Mammary epithelial cell (primary cell): ENCODE measurements at regions of chr17 and their contacts with region 1.

Region 1: GRCh38 chr17:59786536-59787319 is 79.3 kb downstream of the VMP1 start:
- DNase-seq: peak; percentile 100
- H3K4me3 ChIP-seq: peak overlapping the region in 1 of 3 experiments; percentile 0
- H3K27ac ChIP-seq: peak overlapping the region; percentile 99
- H3K4me1 ChIP-seq: peaks cover 37% of the 10 kb centered on the region
- H3K27me3 ChIP-seq: no peaks in the 10 kb centered on the region
- CTCF ChIP-seq: peak in 1 of 2 donors; percentile 13

Region 2: GRCh38 chr17:59695945-59696692 is 90.6 kb before region 1 on chr17:
- CTCF ChIA-PET with region 1: no interaction called
- dilution Hi-C with region 1: no loop called
- in situ Hi-C with region 1: no loop called
- intact Hi-C with region 1: no loop called
- DNase-seq: no peak
- H3K4me3 ChIP-seq: no peak overlapping the region
- H3K27ac ChIP-seq: no peak overlapping the region
- H3K4me1 ChIP-seq: no peaks in the 10 kb centered on the region
- H3K27me3 ChIP-seq: no peaks in the 10 kb centered on the region
- CTCF ChIP-seq: no peak

Region 3: GRCh38 chr17:59762513-59763374 is 24.0 kb before region 1 on chr17:
- CTCF ChIA-PET with region 1: interaction called, 13 read pairs
- dilution Hi-C with region 1: no loop called
- in situ Hi-C with region 1: no loop called
- intact Hi-C with region 1: loop called (anchors 2 kb)
- DNase-seq: peak; percentile 83
- H3K4me3 ChIP-seq: no peak overlapping the region
- H3K27ac ChIP-seq: peak overlapping the region; percentile 96
- H3K4me1 ChIP-seq: peaks cover 27% of the 10 kb centered on the region
- H3K27me3 ChIP-seq: no peaks in the 10 kb centered on the region
- CTCF ChIP-seq: no peak

Region 4: DNA sequence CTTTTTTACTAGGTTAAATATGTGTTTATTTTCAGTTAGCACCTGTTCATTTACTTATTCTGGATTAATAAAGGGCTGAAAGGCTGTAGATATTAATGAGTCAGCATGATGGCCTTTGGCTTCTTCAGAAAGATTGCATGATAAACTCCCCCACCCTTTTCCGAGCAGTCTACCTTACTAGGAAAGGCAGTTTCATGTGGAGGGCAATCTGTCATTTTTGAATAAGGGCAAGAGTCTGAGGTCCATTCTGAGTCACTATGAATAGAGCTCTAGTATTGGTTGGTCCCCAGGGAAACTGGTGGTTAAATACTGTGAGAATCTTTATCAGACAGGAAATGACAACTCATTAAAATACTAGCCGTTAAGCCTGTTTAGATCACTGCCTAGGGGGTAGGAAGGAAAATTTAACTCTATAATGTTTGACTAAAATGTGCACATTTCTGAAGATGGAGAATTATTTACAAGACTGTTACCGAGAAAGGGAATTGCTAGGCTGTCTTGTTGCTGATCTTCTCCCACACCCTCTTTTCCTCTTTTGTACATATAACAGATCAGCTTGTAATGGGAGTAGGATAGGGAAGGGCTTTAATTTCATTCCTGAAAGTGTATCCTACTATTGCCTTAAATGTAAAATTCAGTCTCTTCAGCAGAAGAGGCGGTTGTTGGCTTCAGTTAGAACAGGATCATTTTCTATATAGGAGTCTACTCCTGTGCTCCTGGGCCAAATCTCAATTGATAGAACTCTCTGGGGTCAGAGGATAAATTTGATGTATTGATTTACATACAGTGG is 42.7 kb after region 1 on chr17:
- CTCF ChIA-PET with region 1: no interaction called
- dilution Hi-C with region 1: no loop called
- in situ Hi-C with region 1: loop called in 1 of 2 experiments (anchors 10 kb)
- intact Hi-C with region 1: loop called (anchors 2 kb)
- DNase-seq: peak; percentile 99
- H3K4me3 ChIP-seq: peak overlapping the region in 2 of 3 experiments; percentile 16 to 31
- H3K27ac ChIP-seq: peak overlapping the region; percentile 99
- H3K4me1 ChIP-seq: peaks cover 47% of the 10 kb centered on the region
- H3K27me3 ChIP-seq: no peaks in the 10 kb centered on the region
- CTCF ChIP-seq: no peak

Region 5: DNA sequence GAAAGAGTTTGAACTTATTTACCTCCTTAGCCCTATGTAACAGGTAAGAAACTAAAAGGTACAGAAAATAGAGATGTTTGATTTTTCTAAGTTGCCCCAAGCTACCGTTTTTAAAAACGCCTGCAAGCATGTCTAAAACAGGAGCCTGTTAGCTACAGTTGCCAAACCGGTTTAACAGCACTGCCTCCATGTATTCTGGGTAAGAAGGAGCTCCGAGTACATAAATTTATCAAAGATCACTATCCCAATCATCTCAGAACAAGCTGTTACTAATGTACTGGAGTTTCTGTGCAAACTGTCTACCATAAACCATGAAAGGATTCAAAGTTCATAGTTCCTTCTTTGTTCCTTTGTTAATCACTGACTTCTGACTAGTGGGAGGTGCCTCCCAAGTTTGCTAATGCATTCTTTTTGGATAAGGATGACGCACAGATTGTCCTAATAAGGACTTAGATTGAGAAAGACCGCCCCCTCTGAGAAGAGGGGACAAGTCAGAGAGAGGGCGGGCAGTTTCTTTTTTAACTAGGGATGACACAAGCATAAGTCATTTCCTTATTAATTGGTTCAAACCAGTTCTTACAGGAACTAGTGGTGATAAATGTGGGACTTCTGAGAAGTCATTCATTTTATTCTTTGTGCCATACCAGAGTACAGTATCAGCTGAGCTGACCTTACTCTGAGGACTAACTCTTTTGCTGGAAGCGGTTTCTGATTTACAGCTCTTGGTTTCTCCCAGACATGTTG is 50.8 kb after region 1 on chr17:
- CTCF ChIA-PET with region 1: no interaction called
- dilution Hi-C with region 1: loop called (anchors 5 kb)
- in situ Hi-C with region 1: loop called in 1 of 2 experiments (anchors 10 kb)
- intact Hi-C with region 1: loop called (anchors 1 kb)
- DNase-seq: peak; percentile 100
- H3K4me3 ChIP-seq: peak overlapping the region; percentile 92 to 95 (median 95)
- H3K27ac ChIP-seq: peak overlapping the region; percentile 100
- H3K4me1 ChIP-seq: peaks cover 14% of the 10 kb centered on the region
- H3K27me3 ChIP-seq: no peaks in the 10 kb centered on the region
- CTCF ChIP-seq: no peak